ENCODE measurements at regions of chr2 and their contacts with region 1.

Region 1: DNA sequence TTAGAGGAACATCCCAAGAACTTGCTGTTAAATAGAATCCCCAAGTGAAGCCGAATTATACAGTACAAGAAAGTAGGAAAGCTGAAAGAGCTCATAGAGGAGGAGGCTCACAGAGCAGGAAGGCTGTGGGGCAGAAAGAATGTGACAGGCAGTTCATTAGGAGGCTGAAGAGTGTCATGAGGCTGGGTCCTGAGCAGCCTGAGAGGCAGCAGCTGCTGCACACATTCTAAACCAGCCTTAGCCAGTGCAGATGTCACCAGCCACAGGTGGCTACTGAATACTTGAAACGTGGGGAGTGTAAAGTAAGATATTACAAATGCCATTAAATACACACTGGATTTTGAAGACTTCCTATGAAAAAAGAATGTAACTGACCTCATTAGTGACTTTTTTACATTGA is 490.2 kb upstream of the KLHL29 start:
- DNase-seq: no peak
- ATAC-seq: no peak

Region 2: DNA sequence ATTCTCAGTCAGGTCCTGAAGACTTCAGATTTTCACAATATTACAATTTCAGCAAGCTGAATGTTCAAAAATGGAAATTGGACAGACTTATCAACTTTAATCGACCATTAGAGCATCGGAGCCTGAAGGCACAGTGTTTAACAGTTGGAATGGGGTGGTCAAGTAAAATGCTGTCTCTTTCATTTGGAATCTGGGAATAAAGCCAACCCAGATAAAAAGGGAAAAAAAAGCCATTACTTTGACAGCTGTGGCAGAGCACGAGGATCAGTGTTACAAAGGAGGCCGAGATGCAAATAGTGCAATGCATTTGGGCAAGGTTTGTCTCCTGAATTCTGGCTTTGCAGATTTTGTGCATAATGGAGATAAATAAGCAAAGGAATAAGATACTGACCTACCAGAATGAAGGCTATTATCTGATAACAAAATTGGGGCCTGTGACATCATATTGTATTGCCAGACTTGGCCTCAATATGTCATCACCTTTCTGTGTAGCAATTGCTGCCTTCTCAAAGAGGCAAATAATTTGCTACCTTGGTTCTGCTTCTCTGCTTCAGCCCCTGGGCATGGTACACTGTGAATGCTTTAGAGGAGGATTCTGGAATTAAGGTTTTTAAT is 212.7 kb after region 1 on chr2:
- intact Hi-C with region 1: no loop called
- DNase-seq: no peak
- ATAC-seq: no peak

Region 3: DNA sequence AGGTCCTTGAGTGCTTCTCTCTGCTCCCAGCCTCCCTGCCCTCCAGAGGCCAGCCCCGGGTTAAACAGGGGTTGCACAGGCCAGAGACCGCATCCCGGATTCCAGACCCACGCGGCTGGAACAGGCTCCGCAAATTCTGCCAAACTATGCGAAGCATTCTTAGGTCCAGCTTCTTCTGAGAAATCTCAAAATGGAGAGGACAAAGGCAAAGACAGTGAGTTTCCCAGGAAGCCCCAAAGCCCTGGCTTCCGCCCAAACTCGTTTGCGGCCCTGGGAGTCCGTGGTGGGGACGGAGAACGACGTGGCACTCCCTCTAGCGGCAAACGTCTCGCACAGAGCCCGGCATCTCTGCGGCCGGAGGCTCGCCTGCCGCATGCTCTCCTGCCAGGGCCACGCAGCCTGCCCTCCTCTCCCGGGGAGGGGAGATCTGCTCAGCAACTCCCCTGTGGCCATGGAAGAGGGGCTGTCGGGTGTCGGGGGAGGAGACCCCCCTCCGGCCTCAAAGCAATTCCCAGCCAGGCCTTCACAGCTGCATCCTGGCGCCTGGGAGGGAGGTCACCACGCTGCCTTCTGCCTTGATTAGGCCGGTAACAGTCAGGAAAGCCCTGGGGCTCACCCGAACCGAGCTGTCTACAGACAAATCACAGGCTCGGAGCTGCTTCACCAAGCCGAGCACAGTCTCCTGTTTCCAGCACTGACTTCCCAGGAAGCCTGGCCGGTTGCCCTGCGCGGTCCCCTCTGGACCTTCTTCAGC is 456.8 kb after region 1 on chr2:
- intact Hi-C with region 1: loop called in 1 of 2 experiments (anchors 5 kb)
- DNase-seq: peak; percentile 71 to 84
- ATAC-seq: peak; percentile 97